Mucosa of descending colon (tissue), 3 donors: ENCODE measurements at regions of chr9 and their contacts with region 1.

Region 1: GRCh38 chr9:76302947-76303940 is 91.0 kb downstream of the RFK start:
- DNase-seq: no peak
- ATAC-seq: peak; percentile 87
- H3K4me3 ChIP-seq: no peak overlapping the region
- H3K4me1 ChIP-seq: no peaks in the 10 kb centered on the region
- CTCF ChIP-seq: peak; percentile 21

Region 2: GRCh38 chr9:75921391-75922127 is 381.7 kb before region 1 on chr9:
- intact Hi-C with region 1: no loop called
- DNase-seq: no peak
- ATAC-seq: no peak
- H3K4me3 ChIP-seq: no peak overlapping the region
- H3K4me1 ChIP-seq: no peaks in the 10 kb centered on the region
- CTCF ChIP-seq: no peak

Region 3: GRCh38 chr9:76107482-76107881 is 195.8 kb before region 1 on chr9:
- intact Hi-C with region 1: loop called in 1 of 2 experiments (anchors 10 kb)
- DNase-seq: no peak
- ATAC-seq: no peak
- H3K4me3 ChIP-seq: no peak overlapping the region
- H3K4me1 ChIP-seq: no peaks in the 10 kb centered on the region
- CTCF ChIP-seq: no peak